ENCODE measurements at regions of chr19 and their contacts with region 1.

Region 1: DNA sequence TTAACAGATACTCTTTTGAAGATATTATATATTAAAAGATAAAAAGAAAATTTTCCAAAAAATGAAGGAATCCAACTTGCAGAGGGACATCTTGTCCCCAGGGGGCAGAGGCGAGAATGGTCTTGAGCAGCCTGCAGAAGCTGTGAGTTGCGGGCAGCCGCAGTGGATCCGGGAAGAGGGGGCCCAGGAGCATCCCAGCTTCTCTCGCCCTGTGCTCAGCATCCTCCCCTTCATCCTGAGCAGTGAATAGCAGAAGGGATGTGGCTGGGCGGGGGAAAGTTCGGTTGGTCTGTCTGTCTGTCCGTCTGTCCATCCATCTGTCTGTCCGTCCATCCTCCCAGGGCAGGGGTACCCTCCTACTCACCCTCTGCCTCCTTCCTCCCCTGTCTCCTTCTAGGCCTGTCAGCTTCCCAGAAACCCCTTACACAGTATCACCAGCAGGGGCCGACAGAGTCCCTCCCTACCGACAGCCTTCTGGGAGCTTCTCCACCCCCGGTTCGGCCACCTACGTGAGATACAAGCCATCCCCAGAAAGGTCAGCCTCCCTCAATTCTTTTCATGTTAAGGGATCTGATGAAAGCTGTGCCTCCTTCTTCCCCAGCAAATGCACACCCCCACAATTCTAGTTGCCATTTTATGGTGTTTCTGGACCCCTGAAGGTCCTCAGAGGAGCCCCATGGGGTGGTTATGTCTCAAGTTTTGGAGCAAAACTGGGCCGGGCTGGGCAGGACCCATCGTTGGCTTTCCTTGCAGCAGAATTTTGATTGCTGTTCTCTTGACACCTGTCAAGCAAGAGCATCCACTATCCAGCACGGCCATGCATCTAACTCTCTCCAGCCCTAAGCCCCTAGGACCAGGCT is 81.6 kb downstream of the DPF1 start:
- DNase-seq: peak; percentile 87
- ATAC-seq: peak; percentile 95
- H3K4me3 Mint-ChIP-seq: no peak overlapping the region
- H3K27ac Mint-ChIP-seq: no peak overlapping the region
- H3K4me1 Mint-ChIP-seq: no peaks in the 10 kb centered on the region
- H3K27me3 Mint-ChIP-seq: no peaks in the 10 kb centered on the region
- CTCF ChIP-seq: peak; percentile 52

Region 2: GRCh38 chr19:37953533-37954303 is 188.7 kb before region 1 on chr19:
- CTCF ChIA-PET with region 1: no interaction called
- POLR2A ChIA-PET with region 1: no interaction called
- DNase-seq: no peak
- ATAC-seq: peak; percentile 35
- H3K4me3 Mint-ChIP-seq: no peak overlapping the region
- H3K27ac Mint-ChIP-seq: peak overlapping the region; percentile 89
- H3K4me1 Mint-ChIP-seq: peaks cover 40% of the 10 kb centered on the region
- H3K27me3 Mint-ChIP-seq: no peaks in the 10 kb centered on the region
- CTCF ChIP-seq: no peak

Region 3: DNA sequence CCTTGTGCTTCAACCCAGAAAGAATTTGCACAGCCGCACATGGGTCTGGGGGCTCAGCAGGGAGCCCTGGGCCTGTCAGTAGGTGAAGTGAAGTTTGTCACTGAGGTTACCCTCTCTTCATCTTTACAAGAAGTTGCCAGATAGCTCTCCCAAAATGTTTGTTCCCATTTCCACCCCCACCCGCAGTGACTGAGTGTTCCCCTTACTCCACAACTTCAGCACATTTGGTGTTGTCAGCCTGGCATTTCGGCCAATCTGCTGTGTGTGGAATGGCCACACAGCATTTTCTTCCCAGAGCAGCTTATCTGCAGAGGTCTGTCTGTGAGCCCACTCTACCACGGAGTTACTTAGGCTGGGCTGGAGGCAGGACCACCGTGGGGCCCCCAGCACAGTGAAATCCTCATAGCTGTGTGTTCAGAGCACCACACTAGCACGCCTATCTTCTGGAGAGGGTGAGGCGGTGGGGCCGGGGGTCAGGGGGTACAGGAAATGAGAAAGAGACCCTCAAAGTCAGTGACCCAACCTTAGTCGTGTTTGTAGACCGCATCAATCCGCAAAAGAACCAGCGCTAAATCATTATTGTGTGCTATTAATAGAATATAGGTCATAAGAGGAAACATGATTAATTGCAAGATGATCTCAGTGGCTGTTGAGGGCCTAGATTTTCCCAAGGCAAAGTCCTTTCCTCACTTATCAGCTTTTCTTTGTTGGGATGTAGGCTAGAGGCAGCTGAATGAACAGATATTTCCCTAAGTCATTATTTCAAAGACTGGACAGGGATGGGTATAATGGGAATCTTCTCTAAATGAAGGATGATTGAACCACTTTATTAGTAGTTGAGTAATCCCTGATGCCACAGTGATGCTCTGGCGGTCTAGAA is 119.4 kb before region 1 on chr19:
- CTCF ChIA-PET with region 1: no interaction called
- POLR2A ChIA-PET with region 1: no interaction called
- DNase-seq: no peak
- ATAC-seq: no peak
- H3K4me3 Mint-ChIP-seq: no peak overlapping the region
- H3K27ac Mint-ChIP-seq: peak overlapping the region; percentile 76
- H3K4me1 Mint-ChIP-seq: peaks cover 29% of the 10 kb centered on the region
- H3K27me3 Mint-ChIP-seq: no peaks in the 10 kb centered on the region
- CTCF ChIP-seq: no peak

Region 4: DNA sequence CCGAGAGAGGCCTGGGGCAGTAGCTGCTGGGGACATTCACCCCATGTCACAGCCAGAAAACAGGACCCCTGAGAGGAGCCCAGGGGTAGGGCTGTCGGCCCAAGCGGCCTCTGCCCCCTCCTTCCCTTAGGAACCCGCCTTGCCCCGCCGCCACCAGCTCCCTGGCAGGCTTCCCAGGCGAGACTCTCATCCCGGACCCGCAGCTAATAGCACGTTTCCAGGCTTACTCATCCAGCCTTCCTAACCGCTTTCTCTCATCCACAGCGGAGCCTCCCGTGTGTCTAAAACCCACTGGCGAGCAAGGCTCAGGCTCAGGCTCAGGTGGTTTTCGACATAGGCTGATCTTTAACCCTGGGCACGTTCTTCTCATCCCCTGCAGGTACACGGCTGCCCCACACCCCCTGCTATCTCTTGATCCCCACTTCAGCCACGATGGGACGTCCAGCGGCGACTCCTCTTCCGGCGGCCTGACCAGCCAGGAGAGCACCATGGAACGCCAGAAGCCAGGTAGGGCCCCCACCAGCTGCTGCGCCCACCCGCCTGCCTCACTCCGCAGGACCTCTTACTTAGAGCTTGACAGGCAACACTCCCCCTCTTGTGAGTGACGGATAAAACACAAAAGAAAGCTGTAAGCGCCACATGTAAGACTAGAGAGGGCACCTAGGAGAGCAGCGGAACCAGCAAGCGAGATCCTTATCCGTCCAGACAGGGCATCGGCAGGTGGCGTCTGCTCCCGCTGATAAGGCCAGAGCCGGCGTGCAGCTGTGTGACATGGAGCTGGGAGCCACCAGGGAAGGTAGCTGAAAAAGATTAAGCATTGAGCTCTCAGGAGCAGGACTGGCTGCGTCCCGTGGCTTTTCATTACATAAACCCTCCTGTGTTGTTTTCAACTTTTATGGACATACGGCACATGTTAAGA is 10.3 kb after region 1 on chr19:
- CTCF ChIA-PET with region 1: interaction called, 20 read pairs
- POLR2A ChIA-PET with region 1: interaction called, 7 read pairs
- DNase-seq: no peak
- ATAC-seq: no peak
- H3K4me3 Mint-ChIP-seq: no peak overlapping the region
- H3K27ac Mint-ChIP-seq: no peak overlapping the region; the same call in 1 of the 2 replicates
- H3K4me1 Mint-ChIP-seq: peaks cover 2% of the 10 kb centered on the region; the same call in 1 of the 2 replicates
- H3K27me3 Mint-ChIP-seq: no peaks in the 10 kb centered on the region; the same call in 1 of the 2 replicates
- CTCF ChIP-seq: no peak

Region 5: GRCh38 chr19:38183251-38183897 is 41.0 kb after region 1 on chr19:
- CTCF ChIA-PET with region 1: interaction called, 75 read pairs
- POLR2A ChIA-PET with region 1: no interaction called
- DNase-seq: peak; percentile 85
- ATAC-seq: peak; percentile 97
- H3K4me3 Mint-ChIP-seq: peak overlapping the region; percentile 83
- H3K27ac Mint-ChIP-seq: peak overlapping the region; percentile 12; the same call in 1 of the 2 replicates
- H3K4me1 Mint-ChIP-seq: peaks cover 25% of the 10 kb centered on the region
- H3K27me3 Mint-ChIP-seq: no peaks in the 10 kb centered on the region
- CTCF ChIP-seq: no peak

Region 6: DNA sequence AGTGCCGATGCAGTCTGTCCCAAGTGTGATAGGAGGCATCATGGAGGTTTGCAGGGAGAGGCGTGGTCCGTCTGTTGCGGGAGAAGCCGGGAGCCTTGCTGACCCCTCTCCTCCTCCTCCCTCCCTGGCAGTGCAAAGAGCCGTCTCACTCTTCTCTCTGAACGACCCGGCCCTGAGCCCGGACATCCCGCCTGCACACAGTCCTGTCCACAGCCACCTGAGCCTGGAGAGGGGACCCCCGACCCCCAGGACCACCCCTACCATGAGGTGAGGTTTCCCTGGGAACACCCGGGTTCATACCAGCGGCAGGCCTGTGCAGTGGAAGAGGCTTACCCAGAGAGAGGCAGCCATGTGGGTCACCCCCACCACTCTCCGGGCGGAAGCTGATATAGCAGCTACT is 59.3 kb after region 1 on chr19:
- CTCF ChIA-PET with region 1: interaction called, 88 read pairs
- POLR2A ChIA-PET with region 1: no interaction called
- DNase-seq: no peak
- ATAC-seq: no peak
- H3K4me3 Mint-ChIP-seq: no peak overlapping the region
- H3K27ac Mint-ChIP-seq: peak overlapping the region; percentile 91
- H3K4me1 Mint-ChIP-seq: no peaks in the 10 kb centered on the region
- H3K27me3 Mint-ChIP-seq: no peaks in the 10 kb centered on the region
- CTCF ChIP-seq: no peak

Region 7: GRCh38 chr19:38224014-38224862 is 81.8 kb after region 1 on chr19 and contains the start of gene DPF1:
- CTCF ChIA-PET with region 1: interaction called, 30 read pairs
- POLR2A ChIA-PET with region 1: no interaction called
- DNase-seq: peak; percentile 92
- ATAC-seq: peak; percentile 83
- H3K4me3 Mint-ChIP-seq: peak within 1 kb of the TSS; percentile 80
- H3K27ac Mint-ChIP-seq: peak within 1 kb of the TSS; percentile 50
- H3K4me1 Mint-ChIP-seq: peaks cover 25% of the 10 kb centered on the region
- H3K27me3 Mint-ChIP-seq: peaks cover 15% of the 10 kb centered on the region
- CTCF ChIP-seq: no peak
- total RNA-seq, gene DPF1: 5.2 to 6.8 TPM (median 5.9 TPM) in 3 replicates

Region 8: GRCh38 chr19:38245826-38246498 is 103.6 kb after region 1 on chr19:
- CTCF ChIA-PET with region 1: interaction called, 19 read pairs
- POLR2A ChIA-PET with region 1: no interaction called
- DNase-seq: no peak
- ATAC-seq: no peak
- H3K4me3 Mint-ChIP-seq: no peak overlapping the region
- H3K27ac Mint-ChIP-seq: 0 out of 2 replicates have a peak overlapping the region, but pooled peaks have one; percentile 3
- H3K4me1 Mint-ChIP-seq: peaks cover 17% of the 10 kb centered on the region
- H3K27me3 Mint-ChIP-seq: peaks cover 2% of the 10 kb centered on the region; the same call in 1 of the 2 replicates
- CTCF ChIP-seq: no peak

Measured in WTC11 (cell line).